OCI-LY7 (cell line): ENCODE measurements at regions of chr10 and their contacts with region 1.

Region 1: GRCh38 chr10:58299580-58299979 is 30.6 kb downstream of the CISD1 start:
- DNase-seq: peak; percentile 70
- H3K4me3 ChIP-seq: no peak overlapping the region
- H3K27ac ChIP-seq: no peak overlapping the region
- H3K4me1 ChIP-seq: no peaks in the 10 kb centered on the region
- CTCF ChIP-seq: peak; percentile 98

Region 2: DNA sequence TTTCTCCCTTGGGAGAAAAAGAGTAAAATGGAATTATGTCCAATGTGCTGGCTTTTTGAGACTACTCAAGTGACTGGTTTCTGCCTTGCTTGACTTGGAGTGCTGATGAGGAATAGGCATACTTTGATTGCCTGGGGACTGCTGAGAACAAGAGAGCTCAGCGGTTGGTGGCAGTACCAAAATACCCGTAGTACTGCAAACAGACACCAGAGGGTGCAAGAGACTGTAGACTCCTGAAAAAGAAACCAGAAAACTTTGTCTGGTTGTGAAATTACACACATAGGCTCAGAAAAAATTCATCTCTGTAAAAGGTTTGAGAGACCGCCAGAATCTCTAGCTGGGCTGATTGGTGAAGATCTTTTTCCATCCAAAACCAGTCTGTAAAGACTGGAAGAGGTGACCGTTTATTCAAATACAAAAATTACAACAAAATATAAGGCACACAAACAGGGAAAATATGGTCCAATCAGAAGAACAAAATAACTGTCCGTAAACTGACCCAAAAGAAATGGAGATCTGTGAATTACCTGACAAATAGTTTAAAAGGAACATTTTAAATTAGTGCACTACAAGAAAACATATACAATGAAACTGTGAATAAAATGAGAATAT is 231.6 kb after region 1 on chr10:
- CTCF ChIA-PET with region 1: no interaction called
- POLR2A ChIA-PET with region 1: no interaction called
- intact Hi-C with region 1: loop called (anchors 10 kb)
- DNase-seq: peak; percentile 54
- H3K4me3 ChIP-seq: no peak overlapping the region
- H3K27ac ChIP-seq: no peak overlapping the region
- H3K4me1 ChIP-seq: no peaks in the 10 kb centered on the region
- CTCF ChIP-seq: peak; percentile 83

Region 3: GRCh38 chr10:59456199-59456598 is 1156.6 kb after region 1 on chr10:
- CTCF ChIA-PET with region 1: no interaction called
- POLR2A ChIA-PET with region 1: no interaction called
- intact Hi-C with region 1: no loop called
- DNase-seq: no peak
- H3K4me3 ChIP-seq: no peak overlapping the region
- H3K27ac ChIP-seq: no peak overlapping the region
- H3K4me1 ChIP-seq: no peaks in the 10 kb centered on the region
- CTCF ChIP-seq: no peak